ENCODE measurements at regions of chr17 and their contacts with region 1.

Region 1: DNA sequence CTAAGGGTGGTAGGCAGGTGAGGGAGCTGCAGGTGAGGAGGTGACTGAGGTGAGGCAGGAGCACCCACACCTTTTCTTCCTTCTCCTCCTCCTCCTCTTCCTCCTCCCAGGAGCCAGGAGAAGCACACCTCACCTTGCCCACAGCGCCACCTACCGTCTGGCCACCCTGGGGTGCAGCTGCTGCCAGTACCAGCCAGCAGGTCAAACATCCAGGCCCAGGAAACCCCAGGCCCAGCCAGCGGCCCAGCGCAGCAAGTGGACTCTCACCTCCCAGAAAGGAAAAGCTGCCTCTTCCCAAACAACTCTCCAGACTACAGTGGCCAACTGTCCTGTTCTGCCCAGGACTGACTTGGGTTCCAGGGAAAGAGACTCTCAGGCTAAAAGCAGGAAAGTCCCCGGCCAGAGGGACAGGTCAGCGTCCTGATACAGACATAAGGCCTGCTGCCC is 22.7 kb downstream of the PEMT start:
- DNase-seq: peak; percentile 94
- ATAC-seq: peak; percentile 70
- H3K4me3 Mint-ChIP-seq: no peak overlapping the region
- H3K27ac Mint-ChIP-seq: no peak overlapping the region
- H3K4me1 Mint-ChIP-seq: peaks cover 13% of the 10 kb centered on the region
- H3K27me3 Mint-ChIP-seq: no peaks in the 10 kb centered on the region
- CTCF ChIP-seq: peak; percentile 80

Region 2: DNA sequence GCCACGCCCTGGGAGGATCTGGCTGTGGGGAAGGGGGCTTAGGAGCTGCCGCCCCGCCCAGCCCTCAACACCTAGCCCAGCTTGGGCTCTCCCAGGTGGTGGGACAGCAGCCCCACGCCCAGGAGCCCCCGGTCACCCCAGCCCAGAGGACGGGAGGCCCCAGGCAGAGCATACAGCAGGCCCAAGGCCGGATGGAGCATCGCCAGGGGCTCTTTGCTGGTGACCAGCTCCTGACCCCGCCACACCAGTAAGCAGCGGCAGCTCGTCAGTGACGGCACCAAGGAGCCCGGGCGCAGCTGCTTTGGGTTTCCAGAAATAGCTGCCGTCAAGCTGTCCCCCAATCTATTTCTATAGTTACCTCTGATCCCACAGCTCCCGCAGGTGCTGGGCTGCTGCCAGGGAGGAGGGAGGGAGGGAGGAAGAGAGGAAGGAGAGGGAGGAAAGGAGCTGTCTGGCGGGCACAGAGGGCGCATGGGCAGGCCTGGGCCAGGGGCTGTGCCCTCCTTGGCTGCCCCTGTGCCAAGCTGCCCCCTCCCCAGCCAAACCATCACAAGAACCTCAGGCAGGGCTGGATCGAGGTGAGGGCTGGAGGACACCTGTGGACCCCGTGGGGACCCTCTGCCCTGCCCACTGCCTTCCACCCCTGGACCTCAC is 61.8 kb before region 1 on chr17:
- CTCF ChIA-PET with region 1: interaction called, 16 read pairs
- POLR2A ChIA-PET with region 1: no interaction called
- DNase-seq: no peak
- ATAC-seq: no peak
- H3K4me3 Mint-ChIP-seq: no peak overlapping the region
- H3K27ac Mint-ChIP-seq: no peak overlapping the region
- H3K4me1 Mint-ChIP-seq: peaks cover 3% of the 10 kb centered on the region; the same call in 1 of the 2 replicates
- H3K27me3 Mint-ChIP-seq: no peaks in the 10 kb centered on the region
- CTCF ChIP-seq: no peak

Region 3: GRCh38 chr17:17538417-17539391 is 30.1 kb before region 1 on chr17:
- CTCF ChIA-PET with region 1: interaction called, 16 read pairs
- POLR2A ChIA-PET with region 1: no interaction called
- DNase-seq: no peak
- ATAC-seq: no peak
- H3K4me3 Mint-ChIP-seq: no peak overlapping the region
- H3K27ac Mint-ChIP-seq: no peak overlapping the region
- H3K4me1 Mint-ChIP-seq: peaks cover 4% of the 10 kb centered on the region; the same call in 1 of the 2 replicates
- H3K27me3 Mint-ChIP-seq: no peaks in the 10 kb centered on the region
- CTCF ChIP-seq: no peak

Region 4: GRCh38 chr17:17580662-17581470 is 12.1 kb after region 1 on chr17:
- CTCF ChIA-PET with region 1: interaction called, 21 read pairs
- POLR2A ChIA-PET with region 1: no interaction called
- DNase-seq: no peak
- ATAC-seq: no peak
- H3K4me3 Mint-ChIP-seq: no peak overlapping the region
- H3K27ac Mint-ChIP-seq: peak overlapping the region; percentile 76
- H3K4me1 Mint-ChIP-seq: 0 out of 2 replicates have a peak, but pooled peaks cover 4% of the 10 kb centered on the region
- H3K27me3 Mint-ChIP-seq: no peaks in the 10 kb centered on the region
- CTCF ChIP-seq: no peak

Region 5: DNA sequence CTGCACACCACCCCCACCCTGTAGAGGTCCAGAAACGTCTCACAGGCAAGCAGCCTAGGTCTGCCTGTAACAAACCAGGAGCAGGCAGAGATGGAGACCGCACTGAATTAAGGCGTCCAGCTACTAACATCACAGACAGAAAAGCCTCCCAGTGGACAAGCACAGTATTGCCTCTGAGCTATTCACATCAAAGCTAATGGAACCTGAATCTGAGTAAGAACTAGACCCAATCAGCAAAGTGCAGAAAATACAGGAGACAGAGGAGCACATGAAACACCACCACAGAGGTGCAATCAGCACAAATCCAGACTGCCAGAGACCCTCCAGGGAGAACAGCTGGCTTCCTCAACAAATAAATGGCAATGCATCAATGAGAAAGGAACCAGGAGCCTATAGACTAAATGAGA is 44.9 kb after region 1 on chr17:
- CTCF ChIA-PET with region 1: interaction called, 12 read pairs
- POLR2A ChIA-PET with region 1: no interaction called
- DNase-seq: peak; percentile 75
- ATAC-seq: peak; percentile 92
- H3K4me3 Mint-ChIP-seq: no peak overlapping the region
- H3K27ac Mint-ChIP-seq: no peak overlapping the region; the same call in 1 of the 2 replicates
- H3K4me1 Mint-ChIP-seq: peaks cover 26% of the 10 kb centered on the region
- H3K27me3 Mint-ChIP-seq: no peaks in the 10 kb centered on the region
- CTCF ChIP-seq: peak; percentile 43; the same call in 1 of the 2 replicates

Region 6: DNA sequence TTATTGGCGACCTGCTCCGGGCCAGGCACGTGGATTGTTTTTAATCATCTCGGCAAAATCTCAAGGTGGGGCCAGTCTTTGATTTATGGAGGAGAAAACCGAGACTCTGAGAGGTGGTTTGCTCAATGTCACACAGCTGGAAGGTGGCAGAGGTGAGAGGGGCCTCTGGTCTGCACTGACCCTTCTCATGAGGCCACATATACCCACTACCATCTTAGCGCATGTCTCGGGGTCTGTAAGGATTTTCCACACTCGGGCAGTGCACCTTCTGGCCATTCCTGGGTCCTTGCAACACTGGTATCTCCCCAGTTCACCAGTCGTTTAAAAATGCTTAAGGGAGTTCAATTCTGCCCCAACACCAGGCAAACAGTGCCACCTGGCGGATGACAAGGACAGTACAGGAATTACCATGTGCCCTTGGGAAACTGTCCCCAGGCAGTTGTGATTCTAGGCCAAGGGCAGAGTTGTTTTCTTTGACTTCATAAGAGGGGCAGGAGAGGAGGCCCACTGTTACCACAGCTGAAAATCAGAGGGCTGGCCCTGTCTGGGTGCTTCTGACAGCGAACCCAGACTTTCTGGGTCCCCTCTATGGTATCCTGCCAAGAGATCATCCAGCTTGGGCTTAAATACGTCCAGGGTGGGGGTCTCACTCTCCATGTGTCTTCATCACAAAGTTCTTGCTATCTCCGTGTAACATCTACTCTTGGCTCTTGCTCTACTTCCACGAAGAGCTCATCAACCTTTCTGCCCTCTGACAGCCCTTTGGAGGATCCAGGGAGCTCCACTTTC is 73.0 kb after region 1 on chr17:
- CTCF ChIA-PET with region 1: interaction called, 10 read pairs
- POLR2A ChIA-PET with region 1: no interaction called
- DNase-seq: peak; percentile 85
- ATAC-seq: peak; percentile 96
- H3K4me3 Mint-ChIP-seq: no peak overlapping the region
- H3K27ac Mint-ChIP-seq: no peak overlapping the region
- H3K4me1 Mint-ChIP-seq: peaks cover 7% of the 10 kb centered on the region
- H3K27me3 Mint-ChIP-seq: no peaks in the 10 kb centered on the region; the same call in 1 of the 2 replicates
- CTCF ChIP-seq: peak; percentile 91

Measured in WTC11 (cell line).